ENCODE measurements at regions of chr3 and their contacts with region 1.

Region 1: DNA sequence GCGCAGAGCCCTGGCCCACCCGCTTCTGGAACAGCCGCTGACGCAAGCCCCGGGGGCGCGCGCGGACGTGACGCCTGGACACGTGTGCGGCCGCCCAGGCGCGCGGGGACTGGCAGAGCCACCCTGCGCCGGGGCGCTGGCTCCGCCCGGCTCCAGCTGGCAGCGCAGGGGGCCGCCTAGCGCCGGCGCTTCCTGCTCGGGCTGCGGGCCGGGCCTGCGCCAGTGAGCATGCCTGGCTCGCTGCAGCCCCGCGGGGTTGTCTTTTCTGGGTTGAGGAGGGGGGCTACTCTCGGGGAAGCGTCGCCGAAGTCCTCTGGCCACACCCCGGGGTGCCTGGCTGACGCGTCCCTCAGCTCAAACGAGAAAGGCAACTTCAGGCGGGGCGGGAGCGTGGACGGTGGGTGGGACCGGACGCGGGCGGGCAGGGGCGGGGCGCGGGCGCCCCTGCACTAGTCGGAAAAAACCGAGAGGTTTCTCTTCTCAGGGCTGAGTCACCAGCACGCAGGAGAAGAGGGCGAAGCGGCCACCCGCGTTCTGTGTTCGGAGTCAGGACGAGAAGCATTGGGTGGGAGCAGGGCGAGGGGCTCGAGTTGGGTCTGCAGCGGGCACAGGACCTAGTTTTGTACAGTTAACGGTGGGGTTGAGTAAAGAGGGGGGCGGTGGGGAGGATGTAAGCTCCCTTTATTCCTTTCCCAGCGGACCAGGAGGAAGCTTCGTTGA is at the start of gene SIAH2:
- DNase-seq: peak; percentile 92 to 95 (median 94)
- ATAC-seq: peak; percentile 89
- H3K4me3 ChIP-seq: peak within 1 kb of the TSS; percentile 81
- H3K4me3 Mint-ChIP-seq: peak within 1 kb of the TSS; percentile 97 to 99 (median 98)
- H3K27ac ChIP-seq: peak within 1 kb of the TSS; percentile 99
- H3K27ac Mint-ChIP-seq: peak within 1 kb of the TSS; percentile 99 to 100 (median 100)
- H3K4me1 ChIP-seq: peaks cover 20 to 22% of the 10 kb centered on the region in 2 donors
- H3K4me1 Mint-ChIP-seq: peaks cover 23 to 59% (median 45%) of the 10 kb centered on the region in 7 donors
- H3K27me3 ChIP-seq: no peaks in the 10 kb centered on the region
- H3K27me3 Mint-ChIP-seq: no peaks in the 10 kb centered on the region
- total RNA-seq, gene SIAH2: 19.8 to 39.2 (median 31.0) TPM

Region 2: DNA sequence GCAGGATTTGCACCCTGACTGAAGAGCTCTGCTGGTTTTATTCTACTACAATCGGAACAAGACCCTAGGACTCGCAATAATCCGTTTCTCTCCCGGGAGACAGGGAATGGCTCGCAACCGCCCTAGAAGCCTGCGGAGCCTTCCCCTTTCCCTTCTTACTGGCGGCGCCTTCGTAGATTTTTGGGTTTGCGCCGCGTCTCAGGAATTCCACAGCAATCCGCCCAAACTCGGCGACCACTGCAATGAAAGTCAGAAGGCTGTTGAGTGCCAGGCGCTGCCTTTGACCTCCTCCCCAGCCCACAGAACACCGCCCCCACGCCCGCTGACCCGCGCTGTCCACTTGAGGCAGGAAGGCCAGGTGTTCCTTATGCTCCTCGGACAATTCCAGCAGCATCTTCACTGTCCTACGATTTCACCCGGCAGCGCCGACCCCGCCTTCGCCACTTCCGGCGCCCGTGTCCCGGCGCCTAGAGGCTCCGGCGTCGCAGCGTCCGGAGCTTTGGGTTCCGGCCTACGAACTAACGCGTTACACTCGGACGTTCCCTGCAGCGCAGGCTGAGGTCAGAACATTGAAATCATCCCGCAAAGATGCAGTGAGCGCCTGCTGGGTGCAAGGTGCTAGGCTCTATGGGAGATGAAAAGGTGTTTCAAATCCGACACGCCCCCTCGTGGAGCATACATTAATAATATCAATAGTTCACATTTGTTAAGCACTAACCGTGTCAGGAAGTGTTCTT is 1011.1 kb before region 1 on chr3 and contains the start of gene COMMD2:
- CTCF ChIA-PET with region 1: no interaction called
- POLR2A ChIA-PET with region 1: interaction called, 5 read pairs
- intact Hi-C with region 1: loop called in 1 of 2 experiments (anchors 5 kb)
- DNase-seq: peak; percentile 52 to 76 (median 63)
- ATAC-seq: peak; percentile 91
- H3K4me3 ChIP-seq: peak within 1 kb of the TSS; percentile 81
- H3K4me3 Mint-ChIP-seq: peak within 1 kb of the TSS; percentile 94 to 98 (median 96)
- H3K27ac ChIP-seq: peak within 1 kb of the TSS; percentile 73
- H3K27ac Mint-ChIP-seq: peak within 1 kb of the TSS; percentile 90 to 97 (median 96)
- H3K4me1 ChIP-seq: peaks cover 9 to 20% of the 10 kb centered on the region in 2 donors
- H3K4me1 Mint-ChIP-seq: peaks cover 12 to 56% (median 32%) of the 10 kb centered on the region in 7 donors
- H3K27me3 ChIP-seq: no peaks in the 10 kb centered on the region
- H3K27me3 Mint-ChIP-seq: peaks cover 0 to 2% (median 0%) of the 10 kb centered on the region in 5 donors
- total RNA-seq, gene COMMD2: 29.9 to 44.4 (median 33.4) TPM

Region 3: GRCh38 chr3:150528354-150528797 is 234.9 kb before region 1 on chr3:
- CTCF ChIA-PET with region 1: no interaction called
- POLR2A ChIA-PET with region 1: interaction called, 3 read pairs
- intact Hi-C with region 1: loop called in 1 of 2 experiments (anchors 5 kb)
- DNase-seq: peak in 4 of 9 donors; percentile 23 to 37 (median 28)
- ATAC-seq: peak; percentile 42
- H3K4me3 ChIP-seq: no peak overlapping the region
- H3K4me3 Mint-ChIP-seq: no peak overlapping the region
- H3K27ac ChIP-seq: no peak overlapping the region
- H3K27ac Mint-ChIP-seq: no peak overlapping the region
- H3K4me1 ChIP-seq: no peaks in the 10 kb centered on the region
- H3K4me1 Mint-ChIP-seq: peaks cover 0 to 8% (median 5%) of the 10 kb centered on the region in 7 donors
- H3K27me3 ChIP-seq: no peaks in the 10 kb centered on the region
- H3K27me3 Mint-ChIP-seq: peaks cover 0 to 21% (median 0%) of the 10 kb centered on the region in 5 donors

Region 4: GRCh38 chr3:150680562-150680961 is 82.7 kb before region 1 on chr3:
- CTCF ChIA-PET with region 1: no interaction called
- POLR2A ChIA-PET with region 1: no interaction called
- intact Hi-C with region 1: no loop called
- DNase-seq: no peak
- ATAC-seq: no peak
- H3K4me3 ChIP-seq: no peak overlapping the region
- H3K4me3 Mint-ChIP-seq: no peak overlapping the region
- H3K27ac ChIP-seq: no peak overlapping the region
- H3K27ac Mint-ChIP-seq: peak overlapping the region in 1 of 9 donors; percentile 55
- H3K4me1 ChIP-seq: peaks cover 0 to 4% of the 10 kb centered on the region in 2 donors
- H3K4me1 Mint-ChIP-seq: peaks cover 0 to 22% (median 7%) of the 10 kb centered on the region in 7 donors
- H3K27me3 ChIP-seq: no peaks in the 10 kb centered on the region
- H3K27me3 Mint-ChIP-seq: peaks cover 0 to 7% (median 6%) of the 10 kb centered on the region in 5 donors

Region 5: DNA sequence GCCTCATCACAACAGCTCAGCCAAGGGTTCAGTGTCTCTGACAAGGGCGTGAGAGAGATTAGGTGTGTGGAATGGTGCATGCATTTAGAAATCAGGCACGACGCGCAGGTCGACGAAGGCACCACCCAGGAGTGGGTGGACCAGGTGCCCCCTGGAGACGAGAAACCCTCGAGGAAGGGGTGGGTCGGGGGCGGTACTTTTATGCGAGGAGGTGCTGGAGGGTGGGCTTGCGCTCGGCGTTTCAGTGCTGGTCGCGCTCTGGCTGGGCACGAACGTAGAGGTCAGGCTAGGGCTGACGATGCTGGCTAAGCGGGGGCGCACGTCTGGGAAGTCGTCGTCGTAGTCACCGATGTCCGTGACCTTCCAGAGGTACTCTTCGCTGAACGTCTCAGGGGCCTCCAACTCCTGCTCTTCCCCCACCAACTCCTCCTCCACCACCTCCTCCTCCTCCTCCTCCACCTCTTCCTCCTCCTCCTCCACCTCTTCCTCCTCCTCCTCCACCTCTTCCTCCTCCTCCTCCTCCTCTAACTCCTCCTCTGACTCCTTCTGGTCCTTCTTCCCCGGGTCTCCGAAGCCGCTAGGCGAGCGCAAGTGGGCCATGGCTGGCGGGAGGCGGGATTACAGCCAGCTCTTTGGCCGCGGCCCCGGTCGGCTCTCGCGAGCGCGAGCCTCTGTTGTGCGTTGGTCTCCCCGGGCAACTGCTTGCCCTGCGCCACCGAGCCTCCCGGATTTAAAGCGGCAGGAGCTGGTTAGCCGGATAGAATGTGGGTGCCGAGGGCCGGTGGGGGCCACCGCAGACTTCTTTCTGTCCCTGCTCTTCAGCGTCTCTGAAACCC is 59.8 kb before region 1 on chr3 and contains the start of gene ERICH6:
- CTCF ChIA-PET with region 1: no interaction called
- POLR2A ChIA-PET with region 1: interaction called, 25 read pairs
- intact Hi-C with region 1: loop called (anchors 1 kb)
- DNase-seq: peak; percentile 59 to 83 (median 71)
- ATAC-seq: peak; percentile 93
- H3K4me3 ChIP-seq: peak within 1 kb of the TSS; percentile 94
- H3K4me3 Mint-ChIP-seq: peak within 1 kb of the TSS; percentile 82 to 98 (median 97)
- H3K27ac ChIP-seq: peak within 1 kb of the TSS; percentile 84
- H3K27ac Mint-ChIP-seq: peak within 1 kb of the TSS; percentile 93 to 100 (median 97)
- H3K4me1 ChIP-seq: peaks cover 4 to 5% of the 10 kb centered on the region in 2 donors
- H3K4me1 Mint-ChIP-seq: peaks cover 11 to 24% (median 20%) of the 10 kb centered on the region in 7 donors
- H3K27me3 ChIP-seq: no peaks in the 10 kb centered on the region
- H3K27me3 Mint-ChIP-seq: peaks cover 0 to 6% (median 0%) of the 10 kb centered on the region in 5 donors
- total RNA-seq, gene ERICH6: 0.24 to 1.4 (median 0.53) TPM

Region 6: GRCh38 chr3:150787741-150788370 is 24.6 kb after region 1 on chr3:
- CTCF ChIA-PET with region 1: interaction called, 8 read pairs
- POLR2A ChIA-PET with region 1: interaction called, 6 read pairs
- intact Hi-C with region 1: loop called (anchors 1 kb)
- DNase-seq: peak; percentile 45 to 77 (median 63)
- ATAC-seq: peak; percentile 92
- H3K4me3 ChIP-seq: no peak overlapping the region
- H3K4me3 Mint-ChIP-seq: peak overlapping the region in 2 of 10 donors; percentile 24 to 50
- H3K27ac ChIP-seq: no peak overlapping the region
- H3K27ac Mint-ChIP-seq: no peak overlapping the region
- H3K4me1 ChIP-seq: no peaks in the 10 kb centered on the region
- H3K4me1 Mint-ChIP-seq: peaks cover 0 to 22% (median 4%) of the 10 kb centered on the region in 7 donors
- H3K27me3 ChIP-seq: no peaks in the 10 kb centered on the region
- H3K27me3 Mint-ChIP-seq: peaks cover 0 to 9% (median 4%) of the 10 kb centered on the region in 5 donors

Region 7: GRCh38 chr3:151282921-151283320 is 519.6 kb after region 1 on chr3:
- CTCF ChIA-PET with region 1: no interaction called
- POLR2A ChIA-PET with region 1: no interaction called
- intact Hi-C with region 1: loop called in 1 of 2 experiments (anchors 5 kb)
- DNase-seq: peak in 7 of 9 donors; percentile 39 to 74 (median 68)
- ATAC-seq: peak; percentile 76
- H3K4me3 ChIP-seq: no peak overlapping the region
- H3K4me3 Mint-ChIP-seq: peak overlapping the region in 1 of 10 donors; percentile 41
- H3K27ac ChIP-seq: no peak overlapping the region
- H3K27ac Mint-ChIP-seq: peak overlapping the region in 1 of 9 donors; percentile 56
- H3K4me1 ChIP-seq: peaks cover 6 to 9% of the 10 kb centered on the region in 2 donors
- H3K4me1 Mint-ChIP-seq: peaks cover 7 to 57% (median 18%) of the 10 kb centered on the region in 7 donors
- H3K27me3 ChIP-seq: no peaks in the 10 kb centered on the region
- H3K27me3 Mint-ChIP-seq: no peaks in the 10 kb centered on the region

Region 8: GRCh38 chr3:151770956-151771355 is 1007.7 kb after region 1 on chr3:
- CTCF ChIA-PET with region 1: no interaction called
- POLR2A ChIA-PET with region 1: no interaction called
- intact Hi-C with region 1: no loop called
- DNase-seq: no peak
- ATAC-seq: no peak
- H3K4me3 ChIP-seq: no peak overlapping the region
- H3K4me3 Mint-ChIP-seq: no peak overlapping the region
- H3K27ac ChIP-seq: no peak overlapping the region
- H3K27ac Mint-ChIP-seq: no peak overlapping the region
- H3K4me1 ChIP-seq: no peaks in the 10 kb centered on the region
- H3K4me1 Mint-ChIP-seq: peaks cover 0 to 2% (median 0%) of the 10 kb centered on the region in 7 donors
- H3K27me3 ChIP-seq: no peaks in the 10 kb centered on the region
- H3K27me3 Mint-ChIP-seq: peaks cover 0 to 26% (median 12%) of the 10 kb centered on the region in 5 donors

Measured in naive thymus-derived CD4-positive, alpha-beta T cell (primary cell).